PC-9 (cell line): ENCODE measurements at regions of chr2 and their contacts with region 1.

Region 1: GRCh38 chr2:83747141-83747540 is 711.9 kb downstream of the SUCLG1 start:
- DNase-seq: no peak
- H3K4me3 ChIP-seq: no peak overlapping the region
- H3K27ac ChIP-seq: no peak overlapping the region
- H3K4me1 ChIP-seq: no peaks in the 10 kb centered on the region
- H3K27me3 ChIP-seq: no peaks in the 10 kb centered on the region
- CTCF ChIP-seq: no peak

Region 2: GRCh38 chr2:85577386-85578242 is 1830.5 kb after region 1 on chr2 and contains the start of gene VAMP8:
- CTCF ChIA-PET with region 1: no interaction called
- POLR2A ChIA-PET with region 1: interaction called, 10 read pairs
- intact Hi-C with region 1: no loop called
- DNase-seq: peak; percentile 79 to 83
- H3K4me3 ChIP-seq: peak within 1 kb of the TSS; percentile 60
- H3K27ac ChIP-seq: peak within 1 kb of the TSS; percentile 64
- H3K4me1 ChIP-seq: peaks cover 22% of the 10 kb centered on the region
- H3K27me3 ChIP-seq: no peaks in the 10 kb centered on the region
- CTCF ChIP-seq: no peak
- total RNA-seq, gene VAMP8: 91.9 and 124 TPM in 2 replicates